Activated B cell treated with CpG ODN at 0.5 μM for 24 hours (primary cell): ENCODE measurements at regions of chr2 and their contacts with region 1.

Region 1: DNA sequence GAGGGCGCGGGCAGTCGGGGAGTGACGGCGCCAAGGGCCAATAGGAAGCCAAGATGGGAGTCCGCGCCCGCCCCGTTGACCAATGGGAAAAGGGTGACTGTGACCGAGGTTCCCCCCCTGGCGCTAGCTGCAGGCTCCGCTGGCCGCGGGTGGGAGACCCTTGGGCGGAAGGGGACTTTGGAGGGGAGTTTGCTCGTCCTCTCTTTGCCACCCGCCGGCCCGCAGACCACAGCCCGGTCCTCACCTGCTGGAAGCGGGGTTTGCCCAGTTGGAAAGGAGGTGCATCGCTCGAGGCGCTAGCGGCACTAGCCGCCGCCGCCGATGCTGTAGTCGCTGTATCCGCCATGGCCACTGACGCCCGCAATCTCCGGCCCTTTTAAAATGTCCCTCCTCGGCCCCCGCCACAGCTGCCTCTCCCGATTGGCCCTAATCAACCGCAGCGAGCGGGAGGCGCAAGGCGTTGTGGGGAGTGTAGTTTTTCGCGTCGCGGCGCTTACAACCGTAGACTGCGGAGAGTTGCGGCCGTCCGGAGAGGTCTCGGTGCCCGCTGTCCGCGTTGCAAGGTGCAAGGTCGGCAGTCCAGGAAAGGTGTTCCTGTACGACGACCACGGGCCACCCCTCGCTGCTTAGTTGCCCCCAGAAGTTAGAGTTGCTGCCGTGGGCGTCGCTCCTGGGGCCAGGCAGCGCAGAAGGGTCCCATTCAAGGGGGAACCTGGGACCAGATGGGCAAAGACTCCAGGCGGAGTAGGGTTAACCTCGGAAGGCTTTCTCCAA is at the start of gene SFXN5:
- DNase-seq: peak; percentile 99
- ATAC-seq: peak; percentile 89
- H3K4me3 Mint-ChIP-seq: peak within 1 kb of the TSS; percentile 90
- H3K27ac Mint-ChIP-seq: peak within 1 kb of the TSS; percentile 94
- H3K4me1 Mint-ChIP-seq: peaks cover 18% of the 10 kb centered on the region
- H3K27me3 Mint-ChIP-seq: no peaks in the 10 kb centered on the region
- CTCF ChIP-seq: no peak
- total RNA-seq, gene SFXN5: 10.2 and 13.9 TPM in 2 replicates

Region 2: DNA sequence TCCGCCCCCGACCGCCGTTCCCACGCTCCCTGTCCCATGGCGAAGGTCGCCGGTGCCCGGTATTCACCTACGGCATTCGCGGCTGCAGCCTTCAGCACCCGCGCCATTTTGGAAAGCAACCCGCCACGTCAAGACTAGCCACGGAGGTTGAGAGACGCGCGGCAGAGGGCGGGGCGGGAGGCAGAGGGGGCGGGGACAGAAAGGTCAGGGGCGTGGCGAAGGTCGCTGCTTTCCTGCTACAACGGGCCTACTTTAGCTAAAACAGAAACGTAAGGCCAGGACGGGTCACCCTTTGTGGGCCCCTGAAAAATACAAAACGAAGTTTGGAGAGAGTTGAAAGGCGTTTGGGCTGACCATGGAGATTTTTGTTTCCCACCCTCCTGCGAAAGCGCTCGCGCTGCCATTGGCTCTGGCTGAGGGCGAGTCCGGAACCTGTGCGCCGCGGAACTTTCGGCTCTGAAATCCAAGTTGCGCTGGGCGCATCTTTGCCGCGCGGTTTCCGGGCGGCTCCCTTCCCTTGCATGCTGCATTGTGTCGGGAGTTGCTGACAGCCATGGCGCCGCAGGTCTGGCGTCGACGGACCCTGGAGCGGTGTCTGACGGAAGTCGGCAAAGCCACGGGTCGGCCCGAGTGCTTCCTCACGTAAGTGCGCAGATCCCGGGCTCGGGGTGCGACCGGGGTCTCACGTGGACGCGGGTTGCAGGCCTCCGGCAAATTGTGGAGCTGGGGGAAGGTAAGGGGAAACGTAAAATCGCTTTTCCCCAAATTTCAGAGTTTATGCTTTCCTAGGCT is 1941.2 kb before region 1 on chr2 and contains the starts of genes MCEE and MPHOSPH10:
- CTCF ChIA-PET with region 1: no interaction called
- POLR2A ChIA-PET with region 1: no interaction called
- intact Hi-C with region 1: loop called (anchors 5 kb)
- DNase-seq: peak; percentile 79
- ATAC-seq: peak; percentile 94
- H3K4me3 Mint-ChIP-seq: no peak within 1 kb of the TSS
- H3K27ac Mint-ChIP-seq: no peak within 1 kb of the TSS
- H3K4me1 Mint-ChIP-seq: peaks cover 17% of the 10 kb centered on the region
- H3K27me3 Mint-ChIP-seq: no peaks in the 10 kb centered on the region
- CTCF ChIP-seq: no peak
- total RNA-seq, gene MCEE: 11.1 and 12.2 TPM in 2 replicates
- total RNA-seq, gene MPHOSPH10: 47.6 and 47.8 TPM in 2 replicates

Region 3: DNA sequence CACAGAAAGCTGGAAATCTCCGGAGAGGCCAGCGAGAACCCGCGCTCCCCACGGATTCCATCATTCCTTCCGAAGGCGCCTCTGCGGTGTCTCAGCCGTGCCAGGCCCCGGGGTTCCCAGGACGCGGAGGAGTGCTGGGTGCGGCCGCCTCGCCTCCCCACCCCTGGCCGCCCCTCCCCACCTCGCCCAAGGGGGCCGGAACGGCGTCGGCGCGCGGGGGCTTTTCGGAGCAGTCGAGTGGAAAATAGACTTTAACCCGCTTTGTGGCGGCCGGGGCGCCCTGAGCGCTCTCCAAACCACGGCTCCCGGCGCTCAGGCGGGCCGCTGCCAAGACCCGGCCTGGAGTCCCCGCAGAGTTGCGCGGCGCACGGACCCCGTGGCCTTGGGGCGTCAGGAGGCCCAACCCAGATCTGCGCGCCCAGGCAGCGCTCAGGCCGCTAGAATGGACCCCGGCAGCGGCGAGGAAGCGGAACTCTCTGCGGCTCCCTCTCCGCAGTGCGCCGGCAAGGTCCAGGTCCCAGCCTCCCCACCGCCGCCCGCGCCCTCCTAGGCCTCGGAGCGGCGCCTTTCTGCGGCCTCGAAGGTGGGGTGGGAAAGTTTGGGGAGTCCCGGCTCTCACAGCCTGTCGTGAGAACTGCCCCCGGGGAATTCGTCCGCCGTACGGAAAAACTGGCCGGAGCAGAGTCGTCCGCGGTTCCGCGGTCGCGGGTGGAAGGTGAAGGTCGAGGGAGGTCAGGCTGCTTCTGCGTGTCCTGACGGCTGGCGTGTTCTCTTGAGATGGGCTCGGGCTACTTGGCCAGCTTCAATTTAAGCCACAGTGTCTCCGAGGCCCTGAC is 155.4 kb before region 1 on chr2:
- CTCF ChIA-PET with region 1: no interaction called
- POLR2A ChIA-PET with region 1: no interaction called
- intact Hi-C with region 1: loop called (anchors 2 kb)
- DNase-seq: peak; percentile 48
- ATAC-seq: peak; percentile 50
- H3K4me3 Mint-ChIP-seq: peak overlapping the region; percentile 81
- H3K27ac Mint-ChIP-seq: no peak overlapping the region
- H3K4me1 Mint-ChIP-seq: peaks cover 35% of the 10 kb centered on the region
- H3K27me3 Mint-ChIP-seq: peaks cover 65% of the 10 kb centered on the region
- CTCF ChIP-seq: no peak

Region 4: GRCh38 chr2:73085691-73086360 is 14.3 kb after region 1 on chr2:
- CTCF ChIA-PET with region 1: interaction called, 3 read pairs
- POLR2A ChIA-PET with region 1: no interaction called
- intact Hi-C with region 1: loop called (anchors 1 kb)
- DNase-seq: peak; percentile 62
- ATAC-seq: peak; percentile 96
- H3K4me3 Mint-ChIP-seq: no peak overlapping the region
- H3K27ac Mint-ChIP-seq: no peak overlapping the region
- H3K4me1 Mint-ChIP-seq: no peaks in the 10 kb centered on the region
- H3K27me3 Mint-ChIP-seq: peaks cover 3% of the 10 kb centered on the region
- CTCF ChIP-seq: no peak

Region 5: DNA sequence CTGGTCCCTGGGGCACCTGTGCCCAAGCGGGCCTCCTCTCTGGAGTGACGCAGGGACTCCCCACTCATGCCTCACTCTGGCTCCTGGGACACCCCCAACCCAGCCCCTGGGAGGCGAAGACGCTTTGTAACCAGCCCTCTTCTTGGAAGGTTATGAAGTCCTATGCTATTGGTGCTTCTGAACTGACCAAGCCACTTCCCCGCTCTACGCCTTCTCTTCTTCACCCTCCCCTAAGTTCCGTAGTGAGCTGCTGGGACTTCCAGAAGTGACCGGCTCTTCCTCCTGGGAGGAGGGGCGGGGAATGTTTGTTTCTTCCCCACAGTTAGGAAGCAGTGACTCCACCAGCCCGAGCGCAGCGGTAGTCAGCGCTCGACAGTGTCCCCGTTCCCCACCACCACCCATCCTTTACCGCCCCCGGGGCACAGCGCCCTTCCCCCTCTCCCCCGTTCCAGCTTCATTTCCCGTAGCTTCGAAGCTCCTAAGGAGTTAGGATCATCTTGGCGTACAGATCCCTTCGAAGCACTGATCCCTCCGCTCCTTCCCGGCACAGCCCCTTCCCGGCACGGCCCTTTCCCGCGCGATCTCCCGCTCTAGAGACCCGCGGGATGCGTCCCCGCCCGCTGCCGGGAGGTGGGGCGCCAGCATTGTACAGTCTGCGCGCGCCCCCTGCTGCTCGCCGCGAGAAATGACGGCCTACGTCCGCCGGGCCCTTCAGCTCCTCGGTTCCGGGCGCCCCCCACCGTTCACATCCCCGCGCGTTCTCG is 105.5 kb after region 1 on chr2:
- CTCF ChIA-PET with region 1: interaction called, 5 read pairs
- POLR2A ChIA-PET with region 1: interaction called, 14 read pairs
- intact Hi-C with region 1: loop called (anchors 1 kb)
- DNase-seq: peak; percentile 87
- ATAC-seq: peak; percentile 92
- H3K4me3 Mint-ChIP-seq: peak overlapping the region; percentile 94
- H3K27ac Mint-ChIP-seq: peak overlapping the region; percentile 46
- H3K4me1 Mint-ChIP-seq: peaks cover 15% of the 10 kb centered on the region
- H3K27me3 Mint-ChIP-seq: peaks cover 43% of the 10 kb centered on the region
- CTCF ChIP-seq: peak; percentile 69

Region 6: DNA sequence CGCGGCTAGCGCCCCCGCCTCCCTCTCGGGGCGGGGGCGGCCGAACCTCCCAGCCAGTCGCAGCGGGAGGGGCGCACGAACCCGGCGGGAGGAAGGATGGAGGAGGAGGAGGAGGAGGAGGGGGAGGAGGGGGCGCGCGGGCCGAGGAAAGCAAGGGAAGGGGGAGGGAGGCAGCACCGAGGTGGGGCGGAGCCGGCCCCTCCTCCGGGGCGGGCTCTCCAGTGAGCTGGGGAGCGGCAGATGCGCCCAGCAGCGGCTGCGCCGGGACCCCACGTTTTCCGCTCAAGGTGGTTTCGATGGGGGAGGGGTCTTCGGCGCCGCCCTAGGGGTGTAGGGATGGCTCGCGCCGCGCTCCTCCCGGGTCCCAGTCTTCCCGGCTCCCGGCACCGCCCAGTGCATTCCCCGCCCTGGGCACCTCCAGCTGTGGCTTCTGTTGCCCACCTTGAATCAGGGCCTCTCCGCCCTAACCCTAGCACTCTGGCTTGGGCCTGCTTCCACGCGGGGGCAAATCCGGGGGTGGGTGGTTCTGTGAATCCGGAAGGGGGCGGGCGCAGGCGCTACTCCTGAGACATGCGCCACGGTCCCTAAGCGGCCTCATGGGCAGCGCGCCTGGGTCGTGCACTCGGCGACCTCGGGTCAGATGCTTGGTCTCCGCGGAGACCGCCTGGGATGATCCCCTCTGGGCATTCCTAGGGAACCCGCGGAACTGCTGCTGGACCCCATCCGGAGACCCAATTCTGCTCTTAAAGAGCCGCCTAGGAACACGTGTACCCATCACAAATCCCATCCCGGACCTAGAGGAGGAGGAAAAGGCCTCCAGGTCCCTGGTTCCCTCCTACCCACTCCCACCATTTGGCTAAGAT is 213.0 kb after region 1 on chr2 and contains the start of gene FBXO41:
- CTCF ChIA-PET with region 1: no interaction called
- POLR2A ChIA-PET with region 1: no interaction called
- intact Hi-C with region 1: loop called (anchors 1 kb)
- DNase-seq: peak; percentile 67
- ATAC-seq: peak; percentile 73
- H3K4me3 Mint-ChIP-seq: peak within 1 kb of the TSS; percentile 82
- H3K27ac Mint-ChIP-seq: peak within 1 kb of the TSS; percentile 89
- H3K4me1 Mint-ChIP-seq: peaks cover 36% of the 10 kb centered on the region
- H3K27me3 Mint-ChIP-seq: no peaks in the 10 kb centered on the region
- CTCF ChIP-seq: no peak
- total RNA-seq, gene FBXO41: 21.4 and 25.7 TPM in 2 replicates

Region 7: GRCh38 chr2:74653985-74654882 is 1582.7 kb after region 1 on chr2 and contains the start of gene SEMA4F:
- CTCF ChIA-PET with region 1: no interaction called
- POLR2A ChIA-PET with region 1: no interaction called
- intact Hi-C with region 1: loop called (anchors 5 kb)
- DNase-seq: peak; percentile 92
- ATAC-seq: peak; percentile 99
- H3K4me3 Mint-ChIP-seq: peak within 1 kb of the TSS; percentile 91
- H3K27ac Mint-ChIP-seq: peak within 1 kb of the TSS; percentile 82
- H3K4me1 Mint-ChIP-seq: peaks cover 16% of the 10 kb centered on the region
- H3K27me3 Mint-ChIP-seq: peaks cover 9% of the 10 kb centered on the region
- CTCF ChIP-seq: no peak
- total RNA-seq, gene SEMA4F: 10.2 and 11.6 TPM in 2 replicates